Right cardiac atrium (tissue), 5 donors: ENCODE measurements at regions of chr18 and their contacts with region 1.

Region 1: DNA sequence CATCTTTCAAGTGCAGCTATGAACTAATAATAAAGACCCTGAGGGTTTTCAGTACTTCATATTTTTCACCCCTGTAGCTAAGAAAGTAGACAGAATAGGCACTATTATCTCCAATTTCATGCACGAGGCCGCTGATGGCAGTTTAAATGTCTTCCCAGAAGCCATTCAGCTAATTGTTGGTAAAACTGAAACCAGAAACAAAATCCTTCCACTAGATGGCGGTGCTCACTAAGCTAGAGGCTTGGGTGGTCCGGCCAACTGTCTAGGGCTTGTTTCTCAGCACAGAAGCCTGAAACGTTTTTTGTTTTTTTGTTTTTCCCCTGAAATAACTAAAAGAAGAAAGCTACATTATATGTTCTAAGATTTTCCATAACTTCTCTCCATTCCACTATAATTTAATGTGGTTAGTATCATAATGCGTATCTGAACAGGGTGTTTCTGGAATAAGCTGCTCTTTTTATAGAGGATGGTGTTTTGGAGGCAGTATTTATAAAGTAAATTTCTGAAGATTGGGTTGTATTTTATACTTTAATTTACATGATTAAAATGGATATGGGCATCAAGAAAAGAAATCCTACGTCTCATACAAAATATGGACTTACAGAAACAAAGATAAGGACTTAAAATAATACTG is 159.4 kb downstream of the PIK3C3 start:
- DNase-seq: peak; percentile 37 to 73 (median 56)
- ATAC-seq: peak; percentile 83 to 88
- H3K4me3 ChIP-seq: no peak overlapping the region
- H3K27ac ChIP-seq: no peak overlapping the region
- H3K4me1 ChIP-seq: no peaks in the 10 kb centered on the region
- H3K27me3 ChIP-seq: no peaks in the 10 kb centered on the region

Region 2: GRCh38 chr18:42274488-42275137 is 160.2 kb after region 1 on chr18:
- intact Hi-C with region 1: loop called in 1 of 4 experiments (anchors 10 kb)
- DNase-seq: no peak
- ATAC-seq: no peak
- H3K4me3 ChIP-seq: no peak overlapping the region
- H3K27ac ChIP-seq: no peak overlapping the region
- H3K4me1 ChIP-seq: peaks cover 2% of the 10 kb centered on the region
- H3K27me3 ChIP-seq: no peaks in the 10 kb centered on the region

Region 3: GRCh38 chr18:42392416-42392815 is 278.0 kb after region 1 on chr18:
- intact Hi-C with region 1: no loop called
- DNase-seq: no peak
- ATAC-seq: no peak
- H3K4me3 ChIP-seq: no peak overlapping the region
- H3K27ac ChIP-seq: no peak overlapping the region
- H3K4me1 ChIP-seq: no peaks in the 10 kb centered on the region
- H3K27me3 ChIP-seq: no peaks in the 10 kb centered on the region

Region 4: DNA sequence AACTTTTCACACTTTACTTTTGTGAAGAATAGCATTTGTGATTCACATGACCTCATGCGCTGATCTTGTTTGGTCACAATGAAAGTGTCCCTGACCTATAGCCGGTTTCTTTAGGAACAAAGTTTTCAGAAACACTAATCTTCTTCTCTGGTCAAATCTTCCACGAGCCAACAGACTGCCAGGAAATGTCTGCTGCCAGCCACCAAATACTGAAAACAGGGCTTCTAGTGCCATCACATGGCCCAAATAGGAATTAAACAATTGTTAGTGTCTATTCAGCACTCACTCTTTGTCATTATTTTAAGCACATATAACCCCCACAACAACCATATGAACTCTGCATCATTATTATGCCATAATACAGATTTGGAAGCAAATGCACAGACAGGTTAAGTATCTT is 1449.4 kb after region 1 on chr18:
- intact Hi-C with region 1: loop called in 1 of 4 experiments (anchors 10 kb)
- DNase-seq: peak in 1 of 3 donors; percentile 43
- ATAC-seq: peak; percentile 57 to 72
- H3K4me3 ChIP-seq: no peak overlapping the region
- H3K27ac ChIP-seq: no peak overlapping the region
- H3K4me1 ChIP-seq: no peaks in the 10 kb centered on the region
- H3K27me3 ChIP-seq: no peaks in the 10 kb centered on the region